Psoas muscle (tissue), 8 donors: ENCODE measurements at regions of chr1 and their contacts with region 1.

Region 1: GRCh38 chr1:117895482-117896114 is 33.8 kb downstream of the GDAP2 start:
- DNase-seq: peak in 1 of 2 donors; percentile 21
- ATAC-seq: peak; percentile 81 to 97 (median 84)
- H3K4me3 ChIP-seq: no peak overlapping the region
- H3K27ac ChIP-seq: peak overlapping the region; percentile 51
- H3K4me1 ChIP-seq: peaks cover 4% of the 10 kb centered on the region
- H3K27me3 ChIP-seq: no peaks in the 10 kb centered on the region
- CTCF ChIP-seq: peak; percentile 74

Region 2: GRCh38 chr1:117512743-117513321 is 382.8 kb before region 1 on chr1:
- intact Hi-C with region 1: loop called in 1 of 2 experiments (anchors 10 kb)
- DNase-seq: no peak
- ATAC-seq: peak in 2 of 4 donors; percentile 28 to 50
- H3K4me3 ChIP-seq: no peak overlapping the region
- H3K27ac ChIP-seq: no peak overlapping the region
- H3K4me1 ChIP-seq: no peaks in the 10 kb centered on the region
- H3K27me3 ChIP-seq: no peaks in the 10 kb centered on the region
- CTCF ChIP-seq: peak; percentile 50

Region 3: DNA sequence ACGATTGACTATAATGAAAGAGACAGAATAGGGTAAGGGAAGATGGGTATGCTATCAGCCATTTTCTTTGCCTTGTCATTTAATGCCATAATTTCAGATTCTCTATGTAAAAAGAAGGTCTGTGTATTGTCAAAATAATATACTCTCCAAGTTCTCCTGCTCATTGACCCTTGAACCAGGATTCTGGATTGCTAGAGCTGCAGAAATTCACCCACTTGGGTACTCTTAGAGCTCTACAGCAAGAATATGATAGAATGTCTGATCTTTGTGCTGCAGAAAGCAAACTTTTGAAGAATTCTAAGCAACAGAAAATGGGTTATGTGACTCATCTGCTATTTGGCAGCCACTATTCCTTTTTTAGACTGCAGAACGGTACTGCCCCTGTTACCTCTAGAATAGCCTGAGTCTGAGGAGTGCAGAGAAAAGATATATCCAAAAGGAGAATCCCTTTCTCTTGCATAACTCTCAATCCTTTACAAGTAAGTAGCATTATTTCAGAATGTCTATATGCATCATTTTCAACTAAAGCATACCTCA is 368.0 kb before region 1 on chr1:
- intact Hi-C with region 1: loop called in 1 of 2 experiments (anchors 10 kb)
- DNase-seq: no peak
- ATAC-seq: no peak
- H3K4me3 ChIP-seq: no peak overlapping the region
- H3K27ac ChIP-seq: no peak overlapping the region
- H3K4me1 ChIP-seq: no peaks in the 10 kb centered on the region
- H3K27me3 ChIP-seq: no peaks in the 10 kb centered on the region
- CTCF ChIP-seq: no peak

Region 4: GRCh38 chr1:117911051-117911450 is 15.5 kb after region 1 on chr1:
- intact Hi-C with region 1: no loop called
- DNase-seq: no peak
- ATAC-seq: no peak
- H3K4me3 ChIP-seq: no peak overlapping the region
- H3K27ac ChIP-seq: no peak overlapping the region
- H3K4me1 ChIP-seq: no peaks in the 10 kb centered on the region
- H3K27me3 ChIP-seq: no peaks in the 10 kb centered on the region
- CTCF ChIP-seq: no peak